Activated naive CD4-positive, alpha-beta T cell treated with anti-CD3 and anti-CD28 coated beads, Interleukin-2, amount 10 ng/mL, durations not matched to agents 7 days and 5 days (primary cell): ENCODE measurements at regions of chr14 and their contacts with region 1.

Region 1: GRCh38 chr14:76456200-76456599 is 80.3 kb downstream of the ESRRB start:
- DNase-seq: peak; percentile 55
- H3K4me3 Mint-ChIP-seq: no peak overlapping the region
- H3K27ac Mint-ChIP-seq: no peak overlapping the region
- H3K4me1 Mint-ChIP-seq: no peaks in the 10 kb centered on the region
- H3K27me3 Mint-ChIP-seq: no peaks in the 10 kb centered on the region

Region 2: DNA sequence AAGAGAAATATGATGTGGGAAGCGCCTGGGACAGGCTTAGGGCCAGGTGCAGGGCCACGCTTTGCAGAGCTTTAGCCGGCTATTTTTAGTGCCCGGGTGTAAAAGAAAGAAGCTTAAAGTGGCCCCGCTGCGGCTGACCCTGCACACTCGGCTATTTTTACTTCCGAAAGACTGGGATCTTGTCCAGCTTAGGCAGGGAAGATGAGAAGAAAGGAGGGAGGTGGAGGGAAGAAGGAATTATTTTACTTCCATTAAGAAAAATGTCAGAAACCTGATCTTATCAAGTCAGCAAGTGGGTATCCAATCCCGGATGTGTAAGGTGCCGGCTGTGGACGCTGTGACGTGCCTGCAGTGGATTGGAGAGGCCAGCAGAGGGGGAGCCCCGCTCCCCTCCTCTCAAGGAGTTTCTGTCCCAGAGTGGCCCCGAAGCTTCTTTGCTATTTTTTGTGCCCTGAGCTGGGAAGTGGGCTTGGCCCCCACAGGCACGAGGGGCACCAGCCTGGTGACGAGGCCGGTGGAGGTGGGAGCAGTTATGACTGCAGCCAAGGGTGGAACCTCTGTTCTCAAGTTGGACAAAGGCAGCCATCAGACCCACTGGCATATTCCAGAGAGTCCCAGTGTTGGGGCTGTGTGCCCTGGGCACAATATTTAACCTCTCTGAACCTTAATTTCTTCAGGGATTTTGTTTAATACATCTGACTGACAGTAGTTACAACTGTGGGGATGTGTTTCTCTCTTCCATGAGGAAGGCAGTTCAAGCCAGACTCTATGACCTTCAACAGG is 17.5 kb after region 1 on chr14:
- CTCF ChIA-PET with region 1: interaction called, 11 read pairs
- DNase-seq: no peak
- H3K4me3 Mint-ChIP-seq: no peak overlapping the region
- H3K27ac Mint-ChIP-seq: no peak overlapping the region
- H3K4me1 Mint-ChIP-seq: no peaks in the 10 kb centered on the region
- H3K27me3 Mint-ChIP-seq: peaks cover 26% of the 10 kb centered on the region

Region 3: DNA sequence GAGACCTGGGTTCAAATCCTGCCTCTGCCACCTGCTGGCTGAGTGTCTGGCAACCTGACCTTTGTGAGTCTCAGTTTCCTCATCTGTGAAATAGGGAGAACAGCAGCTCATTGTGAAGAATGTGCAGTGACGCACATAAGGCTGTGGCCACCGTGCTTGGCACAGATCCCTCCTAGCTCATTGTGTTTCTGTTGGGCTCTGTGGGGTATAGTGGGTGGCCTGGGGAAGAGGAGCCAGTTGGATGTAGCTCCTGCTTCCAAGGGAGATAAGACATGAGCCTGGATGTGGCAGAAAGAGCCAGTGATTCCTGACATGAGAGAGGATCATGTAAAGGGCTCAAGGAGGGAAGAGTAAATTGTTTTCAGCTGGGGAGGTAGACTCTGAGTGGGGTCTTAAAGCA is 39.8 kb after region 1 on chr14:
- CTCF ChIA-PET with region 1: no interaction called
- DNase-seq: no peak
- H3K4me3 Mint-ChIP-seq: no peak overlapping the region
- H3K27ac Mint-ChIP-seq: no peak overlapping the region
- H3K4me1 Mint-ChIP-seq: no peaks in the 10 kb centered on the region
- H3K27me3 Mint-ChIP-seq: no peaks in the 10 kb centered on the region